ENCODE measurements at regions of chr2 and their contacts with region 1.

Region 1: GRCh38 chr2:85852937-85853498 is 35.8 kb downstream of the ST3GAL5 start:
- DNase-seq: peak; percentile 55 to 90 (median 70)
- ATAC-seq: peak; percentile 88
- H3K4me3 ChIP-seq: peak overlapping the region; percentile 56
- H3K4me3 Mint-ChIP-seq: peak overlapping the region; percentile 83
- H3K27ac ChIP-seq: peak overlapping the region; percentile 92 to 96
- H3K27ac Mint-ChIP-seq: peak overlapping the region; percentile 100
- H3K4me1 ChIP-seq: peaks cover 52% of the 10 kb centered on the region
- H3K4me1 Mint-ChIP-seq: peaks cover 74% of the 10 kb centered on the region
- H3K27me3 ChIP-seq: no peaks in the 10 kb centered on the region
- H3K27me3 Mint-ChIP-seq: no peaks in the 10 kb centered on the region
- CTCF ChIP-seq: no peak

Region 2: GRCh38 chr2:85826990-85827878 is 25.8 kb before region 1 on chr2:
- CTCF ChIA-PET with region 1: interaction called, 27 read pairs
- POLR2A ChIA-PET with region 1: interaction called, 20 read pairs
- intact Hi-C with region 1: no loop called
- DNase-seq: peak; percentile 74 to 90 (median 81)
- ATAC-seq: peak; percentile 100
- H3K4me3 ChIP-seq: no peak overlapping the region
- H3K4me3 Mint-ChIP-seq: no peak overlapping the region
- H3K27ac ChIP-seq: peak overlapping the region in 1 of 2 donors; percentile 5
- H3K27ac Mint-ChIP-seq: peak overlapping the region; percentile 49
- H3K4me1 ChIP-seq: peaks cover 10% of the 10 kb centered on the region
- H3K4me1 Mint-ChIP-seq: peaks cover 22% of the 10 kb centered on the region
- H3K27me3 ChIP-seq: no peaks in the 10 kb centered on the region
- H3K27me3 Mint-ChIP-seq: peaks cover 3% of the 10 kb centered on the region
- CTCF ChIP-seq: peak; percentile 92

Region 3: DNA sequence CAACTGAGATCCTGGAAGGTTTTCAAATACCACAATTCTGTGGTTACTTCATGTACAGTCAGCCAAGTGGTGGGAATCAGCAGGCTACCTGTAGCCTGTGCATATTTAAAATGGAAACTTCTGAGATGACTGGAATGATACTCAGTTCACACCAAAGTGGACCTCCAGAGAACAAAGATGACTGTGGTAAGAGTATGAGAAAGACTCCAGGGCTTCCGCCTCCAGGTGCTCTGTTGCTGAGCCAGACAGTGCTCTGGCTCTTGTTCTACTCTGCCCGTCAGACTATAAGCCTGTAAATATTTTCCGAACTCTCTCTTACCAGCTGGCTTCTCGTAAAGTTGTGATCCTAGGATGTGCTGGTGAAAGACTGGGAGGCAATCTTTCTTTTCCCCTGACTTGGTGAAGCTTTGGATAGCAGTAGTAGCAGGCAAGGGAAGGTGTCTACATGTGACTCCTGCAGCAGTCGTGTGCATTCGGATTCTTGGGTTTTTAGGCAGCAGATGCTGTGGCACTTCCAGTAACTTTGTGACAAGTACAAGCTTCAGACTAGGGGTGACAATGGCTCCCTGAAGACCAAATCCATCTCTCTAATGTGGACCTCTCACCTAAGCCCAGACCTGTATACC is 12.6 kb after region 1 on chr2:
- CTCF ChIA-PET with region 1: no interaction called
- POLR2A ChIA-PET with region 1: interaction called, 4 read pairs
- intact Hi-C with region 1: loop called in 1 of 2 experiments (anchors 2 kb)
- DNase-seq: peak in 2 of 14 experiments; percentile 17 to 19
- ATAC-seq: peak; percentile 36
- H3K4me3 ChIP-seq: no peak overlapping the region
- H3K4me3 Mint-ChIP-seq: no peak overlapping the region
- H3K27ac ChIP-seq: peak overlapping the region in 1 of 2 donors; percentile 10
- H3K27ac Mint-ChIP-seq: peak overlapping the region; percentile 56
- H3K4me1 ChIP-seq: peaks cover 34% of the 10 kb centered on the region
- H3K4me1 Mint-ChIP-seq: peaks cover 63% of the 10 kb centered on the region
- H3K27me3 ChIP-seq: no peaks in the 10 kb centered on the region
- H3K27me3 Mint-ChIP-seq: no peaks in the 10 kb centered on the region
- CTCF ChIP-seq: no peak

Measured in CD4-positive, alpha-beta T cell (primary cell).